ENCODE measurements at regions of chr6 and their contacts with region 1.

Region 1: DNA sequence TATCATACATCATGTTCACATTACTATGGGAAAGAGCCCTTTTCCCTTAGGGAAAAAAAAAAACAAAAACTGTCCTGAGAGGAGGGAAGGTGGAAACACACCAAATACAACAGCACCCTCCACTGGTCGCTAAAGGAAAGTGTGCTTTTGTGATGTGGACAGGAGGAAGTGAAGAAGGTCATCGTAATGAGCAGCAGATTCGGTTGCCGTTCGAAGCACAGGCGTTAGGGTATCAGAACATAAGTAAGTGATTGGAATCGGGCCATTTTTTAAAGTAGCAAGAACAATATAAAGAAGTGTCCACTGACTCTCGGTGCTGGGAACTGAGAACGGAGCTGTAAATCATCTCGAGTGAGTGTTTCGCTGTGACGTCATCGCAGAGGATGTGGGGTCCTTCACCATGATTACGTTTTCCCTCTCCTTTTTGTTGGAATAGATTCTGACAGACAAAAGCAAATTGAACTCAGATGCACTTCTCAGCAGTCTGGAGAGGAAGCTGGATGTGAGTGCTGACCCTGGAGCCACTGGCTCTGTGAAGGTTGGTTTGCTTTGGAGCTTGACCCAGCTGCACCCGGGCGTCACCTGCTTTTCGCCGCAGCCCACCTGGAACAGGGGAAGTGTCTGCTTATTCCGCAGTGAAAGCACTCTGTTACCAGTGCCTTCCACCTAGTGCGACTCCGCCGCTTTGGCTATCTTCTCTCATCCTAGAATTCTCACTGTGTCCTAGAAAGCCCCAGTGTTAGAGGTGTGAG is 203.6 kb upstream of the GMDS start:
- DNase-seq: peak; percentile 49 to 72 (median 60)
- ATAC-seq: peak; percentile 94
- H3K4me3 ChIP-seq: no peak overlapping the region
- H3K27ac ChIP-seq: no peak overlapping the region
- H3K4me1 ChIP-seq: no peaks in the 10 kb centered on the region
- H3K27me3 ChIP-seq: peaks cover 2 to 16% of the 10 kb centered on the region in 2 experiments; a peak in 3 of 5 replicates
- CTCF ChIP-seq: peak; percentile 61 to 81 (median 80)
- EP300 ChIP-seq: no peak
- POLR2A ChIP-seq: no peak
- RAD21 ChIP-seq: peak; percentile 60 to 69

Region 2: GRCh38 chr6:1609648-1610496 is 839.1 kb before region 1 on chr6 and contains the start of gene FOXC1:
- CTCF ChIA-PET with region 1: no interaction called
- POLR2A ChIA-PET with region 1: no interaction called
- in situ Hi-C with region 1: loop called (anchors 10 kb)
- intact Hi-C with region 1: no loop called
- DNase-seq: no peak
- ATAC-seq: no peak
- H3K4me3 ChIP-seq: no peak within 1 kb of the TSS
- H3K27ac ChIP-seq: no peak within 1 kb of the TSS
- H3K4me1 ChIP-seq: peaks cover 0 to 25% of the 10 kb centered on the region in 2 experiments; a peak in 2 of 5 replicates
- H3K27me3 ChIP-seq: peaks cover 38 to 49% of the 10 kb centered on the region in 2 experiments
- CTCF ChIP-seq: no peak
- EP300 ChIP-seq: no peak
- POLR2A ChIP-seq: no peak
- RAD21 ChIP-seq: no peak
- polyA plus RNA-seq, gene FOXC1: not detected

Region 3: GRCh38 chr6:2209226-2209809 is 239.7 kb before region 1 on chr6:
- CTCF ChIA-PET with region 1: interaction called, 5 read pairs
- POLR2A ChIA-PET with region 1: no interaction called
- in situ Hi-C with region 1: no loop called
- intact Hi-C with region 1: loop called (anchors 5 kb)
- DNase-seq: peak in 3 of 4 experiments; percentile 39 to 62 (median 49)
- ATAC-seq: peak; percentile 96
- H3K4me3 ChIP-seq: no peak overlapping the region
- H3K27ac ChIP-seq: no peak overlapping the region
- H3K4me1 ChIP-seq: no peaks in the 10 kb centered on the region
- H3K27me3 ChIP-seq: no peaks in the 10 kb centered on the region; a peak in 2 of 5 replicates
- CTCF ChIP-seq: peak; percentile 69 to 75 (median 75)
- EP300 ChIP-seq: no peak
- POLR2A ChIP-seq: no peak
- RAD21 ChIP-seq: peak; percentile 35 to 74; a peak in 3 of 4 replicates

Region 4: GRCh38 chr6:2492686-2493523 is 43.9 kb after region 1 on chr6:
- CTCF ChIA-PET with region 1: no interaction called
- POLR2A ChIA-PET with region 1: no interaction called
- in situ Hi-C with region 1: no loop called
- intact Hi-C with region 1: no loop called
- DNase-seq: no peak
- ATAC-seq: no peak
- H3K4me3 ChIP-seq: no peak overlapping the region
- H3K27ac ChIP-seq: no peak overlapping the region
- H3K4me1 ChIP-seq: no peaks in the 10 kb centered on the region
- H3K27me3 ChIP-seq: peaks cover 0 to 21% of the 10 kb centered on the region in 2 experiments; a peak in 2 of 5 replicates
- CTCF ChIP-seq: no peak
- EP300 ChIP-seq: no peak
- POLR2A ChIP-seq: no peak
- RAD21 ChIP-seq: no peak

Region 5: DNA sequence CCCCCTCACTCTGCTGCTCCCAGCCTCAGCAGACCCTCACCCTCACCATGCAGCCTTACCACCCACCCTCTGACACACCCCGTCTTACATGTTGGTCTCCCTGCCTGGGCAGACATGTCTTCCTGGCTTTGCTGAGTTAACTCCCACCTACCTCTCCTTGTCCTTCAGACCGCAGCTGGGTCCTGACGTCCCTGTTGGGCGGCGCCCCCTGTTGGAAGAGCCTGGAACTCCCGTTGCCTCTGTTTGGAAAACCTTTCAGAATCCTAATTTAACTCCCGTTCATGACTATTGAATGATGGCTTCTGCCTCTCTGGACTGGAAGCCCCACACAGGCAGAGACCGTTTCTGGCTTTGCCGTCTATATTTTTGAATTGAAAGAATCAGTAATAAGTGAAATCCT is 56.6 kb after region 1 on chr6:
- CTCF ChIA-PET with region 1: no interaction called
- POLR2A ChIA-PET with region 1: no interaction called
- in situ Hi-C with region 1: no loop called
- intact Hi-C with region 1: no loop called
- DNase-seq: peak; percentile 29 to 39 (median 34)
- ATAC-seq: peak; percentile 70
- H3K4me3 ChIP-seq: no peak overlapping the region
- H3K27ac ChIP-seq: no peak overlapping the region
- H3K4me1 ChIP-seq: no peaks in the 10 kb centered on the region
- H3K27me3 ChIP-seq: peaks cover 18 to 27% of the 10 kb centered on the region in 2 experiments
- CTCF ChIP-seq: peak; percentile 55 to 73 (median 64)
- EP300 ChIP-seq: no peak
- POLR2A ChIP-seq: no peak
- RAD21 ChIP-seq: peak in 1 of 2 experiments; percentile 13; a peak in 1 of 4 replicates